Activated T-helper 1 cell treated with anti-CD3 and anti-CD28 coated beads, Interleukin-12 subunit alpha, Interleukin-12 subunit beta, Interleukin-2, Interleukin-4 antibody, amounts not matched to agents 30 ng/mL and 10 ng/mL and 1 ng/mL, durations not matched to agents 14 hours and 24 hours and 36 hours (primary cell): ENCODE measurements at regions of chr5 and their contacts with region 1.

Region 1: GRCh38 chr5:146446853-146447733 is at the start of gene TCERG1:
- DNase-seq: peak; percentile 97
- H3K4me3 Mint-ChIP-seq: peak within 1 kb of the TSS; percentile 95
- H3K27ac Mint-ChIP-seq: peak within 1 kb of the TSS; percentile 98
- H3K4me1 Mint-ChIP-seq: peaks cover 33% of the 10 kb centered on the region
- H3K27me3 Mint-ChIP-seq: no peaks in the 10 kb centered on the region
- total RNA-seq, gene TCERG1: 152 and 160 TPM in 2 replicates

Region 2: DNA sequence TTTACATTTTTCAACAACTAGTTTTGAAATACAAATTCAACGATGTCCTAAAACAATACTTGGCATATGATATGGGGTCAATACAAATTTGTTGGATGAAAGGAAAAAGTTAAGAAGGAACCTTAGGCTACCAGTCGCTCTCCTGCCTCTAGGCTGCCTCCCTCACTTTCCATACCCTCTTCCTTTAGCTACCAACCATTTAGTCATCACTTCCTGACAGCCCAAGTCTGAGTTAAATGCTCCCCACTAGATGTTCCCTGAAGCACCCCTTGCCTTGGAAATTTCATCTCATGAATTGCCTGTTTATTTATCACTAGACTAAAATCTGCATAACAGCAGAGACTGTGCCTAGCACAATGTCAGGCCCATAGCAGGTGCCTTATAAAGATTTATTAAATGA is 261.9 kb before region 1 on chr5:
- intact Hi-C with region 1: loop called (anchors 1 kb)
- DNase-seq: no peak
- H3K4me3 Mint-ChIP-seq: peak overlapping the region; percentile 20
- H3K27ac Mint-ChIP-seq: peak overlapping the region; percentile 56
- H3K4me1 Mint-ChIP-seq: peaks cover 9% of the 10 kb centered on the region
- H3K27me3 Mint-ChIP-seq: peaks cover 7% of the 10 kb centered on the region

Region 3: GRCh38 chr5:146203011-146203871 is 243.9 kb before region 1 on chr5 and contains the start of gene RBM27:
- intact Hi-C with region 1: loop called (anchors 1 kb)
- DNase-seq: peak; percentile 97
- H3K4me3 Mint-ChIP-seq: no peak within 1 kb of the TSS
- H3K27ac Mint-ChIP-seq: no peak within 1 kb of the TSS
- H3K4me1 Mint-ChIP-seq: no peaks in the 10 kb centered on the region
- H3K27me3 Mint-ChIP-seq: no peaks in the 10 kb centered on the region
- total RNA-seq, gene RBM27: 31.2 and 33.5 TPM in 2 replicates

Region 4: DNA sequence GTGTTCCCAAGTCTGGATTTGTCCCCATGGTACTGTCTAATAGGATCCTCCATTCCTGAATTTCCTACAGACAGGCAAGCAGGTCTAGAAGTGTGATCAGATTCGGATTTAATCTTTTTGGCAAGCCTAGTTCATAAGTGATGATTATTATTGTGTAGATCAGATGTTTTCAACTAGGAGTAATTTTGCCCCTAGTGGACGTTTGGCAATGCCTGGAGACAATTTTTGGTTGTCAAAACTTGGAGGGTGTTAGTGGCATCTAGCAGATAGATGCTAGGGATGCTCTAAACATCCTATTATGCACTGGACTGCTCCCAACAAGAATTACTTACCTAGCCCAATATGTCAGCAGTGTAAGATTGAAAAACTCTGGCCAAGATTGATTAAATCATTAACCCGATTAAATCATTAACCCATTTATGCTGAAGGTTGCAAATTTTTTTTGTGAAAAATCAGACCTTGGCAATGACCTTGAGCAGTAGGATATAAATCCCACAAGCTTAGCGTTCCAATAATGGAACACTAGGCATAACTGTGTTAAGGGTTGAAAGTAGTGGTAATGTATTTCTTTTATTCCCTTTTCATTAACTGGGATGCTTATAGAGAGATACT is 28.2 kb after region 1 on chr5:
- intact Hi-C with region 1: loop called (anchors 2 kb)
- DNase-seq: no peak
- H3K4me3 Mint-ChIP-seq: no peak overlapping the region
- H3K27ac Mint-ChIP-seq: no peak overlapping the region
- H3K4me1 Mint-ChIP-seq: peaks cover 7% of the 10 kb centered on the region
- H3K27me3 Mint-ChIP-seq: no peaks in the 10 kb centered on the region

Region 5: GRCh38 chr5:146507428-146507827 is 60.3 kb after region 1 on chr5:
- intact Hi-C with region 1: loop called (anchors 10 kb)
- DNase-seq: no peak
- H3K4me3 Mint-ChIP-seq: no peak overlapping the region
- H3K27ac Mint-ChIP-seq: peak overlapping the region; percentile 47
- H3K4me1 Mint-ChIP-seq: no peaks in the 10 kb centered on the region
- H3K27me3 Mint-ChIP-seq: no peaks in the 10 kb centered on the region